ENCODE measurements at regions of chr3 and their contacts with region 1.

Region 1: DNA sequence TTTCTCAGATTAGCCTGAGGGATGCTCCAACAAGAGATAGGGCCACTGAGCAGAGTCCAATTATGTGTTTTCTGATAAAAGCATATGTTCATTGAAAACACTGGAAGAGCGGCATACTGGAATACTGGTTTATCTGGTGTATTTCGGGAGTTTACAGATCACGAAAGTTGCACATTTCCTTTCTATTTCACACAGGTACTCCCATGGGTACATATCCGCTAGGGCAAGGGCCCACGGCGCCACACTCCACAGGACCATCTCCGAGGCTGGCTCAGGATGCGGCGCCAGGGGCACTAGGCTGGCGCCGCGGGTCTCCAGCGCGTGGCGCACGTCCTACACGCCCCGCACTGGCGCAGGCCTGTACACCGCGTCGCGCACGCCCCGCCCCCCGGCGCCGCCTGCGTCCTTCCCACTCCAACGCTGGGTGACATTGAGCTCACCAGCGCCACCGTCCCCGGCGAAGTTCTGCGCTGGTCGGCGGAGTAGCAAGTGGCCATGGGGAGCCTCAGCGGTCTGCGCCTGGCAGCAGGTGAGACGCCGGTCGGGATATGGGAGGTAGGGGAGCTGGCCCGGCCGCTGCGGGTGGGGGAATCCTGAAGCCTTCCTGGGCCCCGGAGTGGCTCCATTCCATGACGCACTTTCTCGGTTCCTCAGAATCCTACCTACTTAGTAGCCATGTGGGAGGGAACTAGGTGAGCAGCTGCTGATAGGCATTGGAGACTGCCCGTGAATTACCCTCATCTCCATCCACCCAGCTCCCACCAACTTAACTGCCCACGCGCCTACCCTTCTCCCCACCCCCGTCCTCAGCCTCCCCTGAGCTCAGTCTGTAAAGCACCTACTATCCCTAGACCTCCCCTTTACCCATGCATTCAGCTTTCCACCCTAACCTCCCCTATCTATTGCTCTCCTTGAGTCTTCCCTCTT is at the start of gene FAM162A:
- DNase-seq: peak; percentile 96
- ATAC-seq: peak; percentile 99
- H3K4me3 Mint-ChIP-seq: peak within 1 kb of the TSS; percentile 96
- H3K27ac Mint-ChIP-seq: peak within 1 kb of the TSS; percentile 90
- H3K4me1 Mint-ChIP-seq: peaks cover 51% of the 10 kb centered on the region
- H3K27me3 Mint-ChIP-seq: no peaks in the 10 kb centered on the region
- total RNA-seq, gene FAM162A: 122 to 123 TPM

Region 2: GRCh38 chr3:122283796-122284445 is 100.1 kb before region 1 on chr3:
- POLR2A ChIA-PET with region 1: no interaction called
- DNase-seq: no peak
- ATAC-seq: no peak
- H3K4me3 Mint-ChIP-seq: no peak overlapping the region
- H3K27ac Mint-ChIP-seq: no peak overlapping the region
- H3K4me1 Mint-ChIP-seq: peaks cover 2% of the 10 kb centered on the region
- H3K27me3 Mint-ChIP-seq: peaks cover 11% of the 10 kb centered on the region

Region 3: DNA sequence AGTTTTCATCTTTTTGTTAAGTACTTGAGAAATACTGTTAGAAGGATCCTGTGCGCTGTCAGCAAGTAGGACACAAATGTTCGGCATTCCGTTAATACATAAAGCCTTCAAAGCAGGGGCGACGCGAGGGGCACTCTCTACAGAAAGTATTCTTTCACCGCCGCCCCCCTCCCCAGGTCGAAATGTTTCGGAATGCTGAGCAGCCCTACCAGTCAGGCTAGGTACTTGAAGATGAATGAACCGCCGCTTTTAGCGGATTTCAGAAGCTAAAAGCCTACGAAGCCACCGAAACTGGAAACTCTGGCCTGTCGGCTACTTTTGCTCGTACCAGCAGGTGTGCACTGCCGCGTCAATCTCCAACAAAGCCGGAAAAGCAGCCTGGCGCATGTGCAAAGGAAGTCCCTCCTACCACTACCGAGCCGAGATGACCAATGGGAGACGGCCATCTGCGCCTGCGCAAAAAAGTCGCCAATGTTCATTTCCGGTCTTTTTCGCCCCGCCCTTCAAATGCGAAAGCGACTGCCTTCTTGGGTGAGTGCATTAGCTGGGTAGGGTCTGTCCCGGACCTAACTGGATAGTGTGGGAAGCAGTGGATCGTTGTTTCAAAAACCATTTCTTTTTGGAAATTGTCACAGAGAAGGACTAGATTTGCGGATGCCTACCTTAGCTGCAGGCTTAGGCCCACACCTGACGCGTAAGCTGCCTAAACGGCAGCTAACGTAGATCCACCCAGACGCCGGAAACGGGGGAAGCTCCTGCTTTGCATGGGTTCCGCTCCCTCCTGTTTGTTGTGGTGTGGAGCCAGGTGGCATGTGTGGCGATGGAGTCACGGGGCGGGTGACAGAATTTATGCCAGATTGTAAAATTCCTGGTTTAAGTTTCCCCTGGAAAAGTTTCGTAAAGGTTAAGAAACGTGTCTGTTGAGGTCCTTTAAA is 32.0 kb after region 1 on chr3 and contains the start of gene WDR5B:
- POLR2A ChIA-PET with region 1: interaction called, 25 read pairs
- DNase-seq: peak; percentile 97
- ATAC-seq: peak; percentile 93
- H3K4me3 Mint-ChIP-seq: peak within 1 kb of the TSS; percentile 97
- H3K27ac Mint-ChIP-seq: peak within 1 kb of the TSS; percentile 98
- H3K4me1 Mint-ChIP-seq: peaks cover 36% of the 10 kb centered on the region
- H3K27me3 Mint-ChIP-seq: no peaks in the 10 kb centered on the region
- total RNA-seq, gene WDR5B: 6.6 to 7.6 TPM

Region 4: DNA sequence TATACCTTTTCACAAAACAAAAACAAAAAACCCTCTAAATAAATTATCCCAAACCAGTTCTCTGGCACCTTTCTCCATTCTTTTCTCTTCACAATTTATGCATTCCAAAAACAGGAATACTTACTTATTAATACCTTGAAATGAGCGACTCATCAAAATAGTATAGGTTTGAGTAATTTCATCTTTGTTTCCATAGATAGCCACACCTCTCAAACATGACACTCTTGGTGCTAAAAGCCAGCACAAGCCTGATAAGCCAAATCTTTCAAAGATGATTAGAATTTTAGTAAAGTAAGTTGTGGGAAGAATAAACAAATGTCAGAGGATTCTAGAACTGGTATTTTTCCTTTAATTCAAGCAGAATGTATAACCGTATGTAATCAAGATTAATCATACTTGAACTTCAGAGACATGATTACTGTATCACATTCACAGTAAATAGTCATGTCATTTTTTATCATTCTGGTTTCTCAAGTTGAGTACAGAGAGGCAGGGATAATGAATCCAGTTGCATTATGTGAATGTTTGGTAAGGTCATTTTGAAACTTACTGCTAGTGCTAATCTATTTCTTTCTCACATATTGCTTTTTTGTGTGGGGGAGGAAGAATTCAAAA is 43.9 kb after region 1 on chr3:
- POLR2A ChIA-PET with region 1: no interaction called
- DNase-seq: no peak
- ATAC-seq: no peak
- H3K4me3 Mint-ChIP-seq: no peak overlapping the region
- H3K27ac Mint-ChIP-seq: no peak overlapping the region
- H3K4me1 Mint-ChIP-seq: peaks cover 2% of the 10 kb centered on the region
- H3K27me3 Mint-ChIP-seq: no peaks in the 10 kb centered on the region